ENCODE measurements at regions of chr20 and their contacts with region 1.

Region 1: DNA sequence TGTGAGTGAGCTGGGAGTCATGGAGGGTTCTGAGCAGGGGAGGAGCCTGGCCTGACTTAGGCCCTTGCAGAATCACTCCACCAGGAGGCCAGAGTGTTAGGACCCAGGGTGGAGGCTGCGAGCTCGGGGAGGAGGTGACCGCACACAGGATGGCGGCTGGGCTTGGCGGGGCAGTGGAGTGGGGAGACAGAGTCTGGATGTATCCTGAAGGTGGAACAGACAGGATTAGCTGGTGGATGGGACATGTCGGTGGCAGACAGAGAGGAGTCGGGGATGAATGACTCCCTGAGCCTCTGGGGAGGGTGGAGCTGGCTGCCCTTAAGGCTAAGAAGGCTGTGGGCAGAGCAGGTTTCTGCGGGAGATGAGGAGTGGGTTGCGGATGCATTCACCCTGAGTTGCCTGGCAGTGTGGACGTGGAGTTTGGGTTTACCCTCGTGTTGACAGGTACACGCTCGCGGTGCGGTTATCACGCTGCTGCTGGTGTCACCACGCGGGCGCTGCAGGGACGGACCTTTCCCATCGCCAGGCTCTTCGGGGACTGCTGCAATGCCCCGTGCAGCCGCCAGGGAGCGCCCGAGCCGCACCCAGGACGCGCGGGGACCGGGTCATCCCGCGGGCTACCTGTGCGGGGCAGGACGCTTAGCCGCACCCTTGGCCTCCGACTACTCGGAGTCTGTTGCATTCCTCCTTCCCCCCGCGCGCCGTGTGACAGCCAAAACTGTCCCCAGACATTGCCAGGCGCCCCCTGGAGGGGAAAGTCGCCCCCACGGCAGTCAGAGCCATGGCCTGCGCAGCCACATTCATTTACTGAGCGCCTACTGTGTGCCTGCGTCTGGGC is 43.0 kb upstream of the PTGIS start:
- DNase-seq: peak; percentile 62 to 89 (median 75)
- ATAC-seq: peak in 3 of 4 donors; percentile 69 to 75 (median 71)
- H3K4me3 ChIP-seq: peak overlapping the region in 8 of 12 donors; percentile 3 to 34 (median 16)
- H3K27ac ChIP-seq: peak overlapping the region in 2 of 12 donors; percentile 34 to 52
- H3K4me1 ChIP-seq: peaks cover 0 to 40% (median 14%) of the 10 kb centered on the region in 12 donors
- H3K27me3 ChIP-seq: peaks cover 0 to 8% (median 0%) of the 10 kb centered on the region in 9 donors
- CTCF ChIP-seq: peak in 11 of 12 donors; percentile 97 to 100 (median 100)
- POLR2A ChIP-seq: no peak

Region 2: GRCh38 chr20:49330544-49331239 is 280.2 kb before region 1 on chr20:
- intact Hi-C with region 1: loop called in 9 of 10 experiments (anchors 2 to 10 kb)
- DNase-seq: no peak
- ATAC-seq: no peak
- H3K4me3 ChIP-seq: no peak overlapping the region
- H3K27ac ChIP-seq: no peak overlapping the region
- H3K4me1 ChIP-seq: no peaks in the 10 kb centered on the region
- H3K27me3 ChIP-seq: peaks cover 0 to 28% (median 7%) of the 10 kb centered on the region in 9 donors
- CTCF ChIP-seq: no peak
- POLR2A ChIP-seq: no peak

Region 3: GRCh38 chr20:49400410-49400809 is 210.5 kb before region 1 on chr20:
- intact Hi-C with region 1: no loop called
- DNase-seq: peak in 4 of 5 donors; percentile 14 to 56 (median 44)
- ATAC-seq: peak; percentile 63 to 84 (median 70)
- H3K4me3 ChIP-seq: no peak overlapping the region
- H3K27ac ChIP-seq: peak overlapping the region; percentile 20 to 87 (median 74)
- H3K4me1 ChIP-seq: peaks cover 0 to 35% (median 15%) of the 10 kb centered on the region in 12 donors
- H3K27me3 ChIP-seq: no peaks in the 10 kb centered on the region
- CTCF ChIP-seq: no peak
- POLR2A ChIP-seq: peak in 1 of 2 donors; percentile 16

Region 4: GRCh38 chr20:49541733-49542513 is 69.0 kb before region 1 on chr20:
- intact Hi-C with region 1: loop called (anchors 1 to 2 kb)
- DNase-seq: peak in 4 of 5 donors; percentile 51 to 67 (median 62)
- ATAC-seq: peak; percentile 31 to 82 (median 68)
- H3K4me3 ChIP-seq: no peak overlapping the region
- H3K27ac ChIP-seq: peak overlapping the region in 2 of 12 donors; percentile 3 to 7
- H3K4me1 ChIP-seq: peaks cover 0 to 2% (median 0%) of the 10 kb centered on the region in 12 donors
- H3K27me3 ChIP-seq: no peaks in the 10 kb centered on the region
- CTCF ChIP-seq: peak; percentile 70 to 84 (median 78)
- POLR2A ChIP-seq: no peak

Region 5: DNA sequence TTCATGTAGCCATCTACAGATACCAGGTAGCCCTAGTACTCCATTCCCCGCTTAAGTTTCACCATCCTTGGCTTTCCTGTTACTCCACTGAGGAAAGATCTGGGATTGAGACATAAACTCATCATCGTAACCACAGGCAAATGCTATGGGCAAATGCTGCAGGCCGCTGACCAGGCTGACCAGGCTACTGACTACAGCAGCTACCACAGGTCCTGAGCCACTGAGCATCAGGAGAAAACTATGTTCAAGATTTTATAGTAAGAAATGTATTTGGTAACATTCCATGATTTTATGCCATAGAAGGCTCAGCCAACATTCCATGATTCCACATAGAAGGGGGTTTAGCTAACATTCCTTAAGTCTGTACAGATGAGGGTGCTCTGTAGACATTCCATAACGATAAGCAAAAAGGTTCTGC is 118.8 kb after region 1 on chr20:
- intact Hi-C with region 1: no loop called
- DNase-seq: no peak
- ATAC-seq: no peak
- H3K4me3 ChIP-seq: no peak overlapping the region
- H3K27ac ChIP-seq: no peak overlapping the region
- H3K4me1 ChIP-seq: peaks cover 0 to 27% (median 0%) of the 10 kb centered on the region in 12 donors
- H3K27me3 ChIP-seq: no peaks in the 10 kb centered on the region
- CTCF ChIP-seq: no peak
- POLR2A ChIP-seq: no peak

Region 6: DNA sequence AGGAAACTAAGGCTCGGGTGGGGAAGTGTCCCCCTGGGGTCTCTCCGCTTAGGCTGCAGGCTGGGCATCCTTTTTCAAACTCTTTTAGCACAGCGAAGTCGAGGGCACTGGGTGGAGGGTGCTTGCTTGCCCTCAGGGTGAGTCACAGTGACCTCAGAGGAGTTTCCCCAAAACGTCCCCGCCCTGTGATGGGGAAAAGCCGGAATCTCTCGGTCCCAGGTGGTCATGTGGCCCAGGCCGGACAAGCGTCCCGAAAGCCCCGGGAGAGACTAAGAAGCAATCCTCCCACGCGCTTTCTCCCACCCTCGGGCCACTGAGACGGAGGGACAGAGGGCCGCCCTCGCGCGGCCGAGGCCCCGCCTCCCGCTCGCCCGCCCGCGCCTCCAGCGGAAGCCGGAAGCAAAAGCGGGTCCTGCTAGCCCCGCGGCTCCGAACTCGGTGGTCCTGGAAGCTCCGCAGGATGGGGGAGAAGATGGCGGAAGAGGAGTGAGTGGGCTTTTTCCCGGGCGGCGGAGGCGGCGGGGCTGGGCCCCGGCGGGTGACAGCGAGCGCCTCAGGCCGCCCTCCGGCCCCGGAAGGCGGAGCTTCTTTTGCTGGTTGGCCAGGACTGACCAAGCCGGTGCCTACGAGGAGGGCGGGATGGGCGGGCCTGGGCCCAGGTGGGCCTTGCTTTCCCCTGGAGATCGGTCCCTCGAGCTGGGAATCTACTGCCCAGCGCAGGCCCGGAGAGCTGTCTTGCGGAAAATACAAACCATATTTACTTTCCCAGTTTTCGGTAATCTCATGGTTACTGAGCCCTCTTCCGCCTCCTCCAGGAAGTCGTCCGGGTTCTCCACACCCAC is 201.8 kb after region 1 on chr20 and contains the start of gene SLC9A8:
- intact Hi-C with region 1: loop called in 3 of 10 experiments (anchors 1 to 10 kb)
- DNase-seq: peak; percentile 90 to 93 (median 93)
- ATAC-seq: peak; percentile 92 to 96 (median 96)
- H3K4me3 ChIP-seq: peak within 1 kb of the TSS; percentile 42 to 97 (median 80)
- H3K27ac ChIP-seq: peak within 1 kb of the TSS; percentile 86 to 100 (median 95)
- H3K4me1 ChIP-seq: peaks cover 4 to 24% (median 12%) of the 10 kb centered on the region in 12 donors
- H3K27me3 ChIP-seq: no peaks in the 10 kb centered on the region
- CTCF ChIP-seq: peak in 11 of 12 donors; percentile 30 to 63 (median 43)
- POLR2A ChIP-seq: peak in 1 of 2 donors; percentile 79
- total RNA-seq, gene SLC9A8: 4.6 to 12.5 (median 6.3) TPM

Region 7: GRCh38 chr20:49832632-49833327 is 221.9 kb after region 1 on chr20:
- intact Hi-C with region 1: loop called in 1 of 10 experiments (anchors 5 kb)
- DNase-seq: no peak
- ATAC-seq: peak in 2 of 4 donors; percentile 39 to 71
- H3K4me3 ChIP-seq: no peak overlapping the region
- H3K27ac ChIP-seq: no peak overlapping the region
- H3K4me1 ChIP-seq: no peaks in the 10 kb centered on the region
- H3K27me3 ChIP-seq: no peaks in the 10 kb centered on the region
- CTCF ChIP-seq: no peak
- POLR2A ChIP-seq: no peak

Region 8: DNA sequence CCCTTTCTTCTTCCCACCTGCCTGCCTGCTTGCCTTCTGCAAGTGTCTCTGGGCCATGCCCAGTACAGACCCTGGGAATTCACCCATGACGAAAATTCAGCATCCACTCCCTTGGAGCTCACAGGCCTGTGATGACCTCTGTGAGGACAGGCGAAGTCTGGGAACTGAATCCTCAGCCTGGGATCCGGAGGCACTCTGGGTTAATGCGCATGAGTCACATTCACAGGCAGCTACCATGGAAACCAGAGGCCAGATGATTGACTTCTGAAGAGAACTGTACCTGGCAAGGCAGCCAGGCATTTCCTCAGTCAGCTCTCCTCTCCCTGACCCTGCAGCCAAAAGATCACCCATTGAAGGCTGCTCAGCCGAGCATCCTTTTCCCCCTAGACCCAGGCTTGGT is 242.7 kb after region 1 on chr20:
- intact Hi-C with region 1: loop called in 4 of 10 experiments (anchors 2 to 10 kb)
- DNase-seq: no peak
- ATAC-seq: no peak
- H3K4me3 ChIP-seq: no peak overlapping the region
- H3K27ac ChIP-seq: no peak overlapping the region
- H3K4me1 ChIP-seq: peaks cover 0 to 37% (median 21%) of the 10 kb centered on the region in 12 donors
- H3K27me3 ChIP-seq: no peaks in the 10 kb centered on the region
- CTCF ChIP-seq: no peak
- POLR2A ChIP-seq: no peak

Region 9: DNA sequence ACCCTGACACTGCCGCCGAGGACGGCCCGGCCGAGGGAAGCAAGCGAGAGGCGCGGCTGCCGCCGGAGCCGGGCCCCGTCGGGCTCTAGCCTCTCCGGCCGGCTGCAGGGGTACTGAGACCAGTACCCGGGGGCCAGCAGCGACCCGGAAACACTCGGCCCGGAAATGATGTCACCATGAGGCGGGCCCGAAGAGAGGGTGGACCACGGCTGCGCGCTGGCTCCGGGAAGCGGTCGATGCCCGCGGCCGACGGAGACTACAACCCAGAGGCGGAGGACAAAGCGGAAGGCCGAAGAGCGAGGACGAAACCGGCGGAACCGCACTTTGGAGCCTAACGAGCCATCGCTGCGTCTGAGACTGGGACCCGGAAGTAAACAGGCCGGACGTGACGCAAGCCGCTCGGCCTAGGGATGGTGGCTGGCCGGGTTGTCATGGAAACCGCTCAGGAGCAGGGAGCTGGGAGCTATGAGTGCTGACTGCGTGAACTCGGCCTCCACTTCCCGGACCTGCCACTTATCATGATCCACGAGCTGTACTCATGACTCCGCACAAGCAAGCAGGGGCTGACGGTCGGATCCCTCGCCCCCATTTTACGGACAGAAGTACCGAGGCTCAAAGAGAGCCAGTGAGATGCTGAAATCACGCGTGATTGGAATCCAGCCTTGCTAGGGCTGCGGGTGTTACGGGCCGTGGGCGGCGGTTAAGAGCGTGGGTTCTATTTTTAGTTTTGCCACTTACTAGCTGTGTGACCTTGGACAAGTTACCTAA is 304.6 kb after region 1 on chr20 and contains the start of gene SPATA2:
- intact Hi-C with region 1: loop called in 2 of 10 experiments (anchors 10 kb)
- DNase-seq: peak; percentile 96 to 99 (median 97)
- ATAC-seq: peak; percentile 90 to 95 (median 94)
- H3K4me3 ChIP-seq: peak within 1 kb of the TSS; percentile 72 to 99 (median 96)
- H3K27ac ChIP-seq: peak within 1 kb of the TSS; percentile 93 to 100 (median 99)
- H3K4me1 ChIP-seq: peaks cover 9 to 54% (median 37%) of the 10 kb centered on the region in 12 donors
- H3K27me3 ChIP-seq: no peaks in the 10 kb centered on the region
- CTCF ChIP-seq: no peak
- POLR2A ChIP-seq: peak in 1 of 2 donors; percentile 57
- total RNA-seq, gene SPATA2: 5.9 to 9.3 (median 7.8) TPM